Dendritic cell treated with granulocyte-macrophage colony-stimulating factor and Interleukin-4, amounts not matched to agents 40 ng/mL and 50 ng/mL, for 4 days (primary cell): ENCODE measurements at regions of chr3 and their contacts with region 1.

Region 1: DNA sequence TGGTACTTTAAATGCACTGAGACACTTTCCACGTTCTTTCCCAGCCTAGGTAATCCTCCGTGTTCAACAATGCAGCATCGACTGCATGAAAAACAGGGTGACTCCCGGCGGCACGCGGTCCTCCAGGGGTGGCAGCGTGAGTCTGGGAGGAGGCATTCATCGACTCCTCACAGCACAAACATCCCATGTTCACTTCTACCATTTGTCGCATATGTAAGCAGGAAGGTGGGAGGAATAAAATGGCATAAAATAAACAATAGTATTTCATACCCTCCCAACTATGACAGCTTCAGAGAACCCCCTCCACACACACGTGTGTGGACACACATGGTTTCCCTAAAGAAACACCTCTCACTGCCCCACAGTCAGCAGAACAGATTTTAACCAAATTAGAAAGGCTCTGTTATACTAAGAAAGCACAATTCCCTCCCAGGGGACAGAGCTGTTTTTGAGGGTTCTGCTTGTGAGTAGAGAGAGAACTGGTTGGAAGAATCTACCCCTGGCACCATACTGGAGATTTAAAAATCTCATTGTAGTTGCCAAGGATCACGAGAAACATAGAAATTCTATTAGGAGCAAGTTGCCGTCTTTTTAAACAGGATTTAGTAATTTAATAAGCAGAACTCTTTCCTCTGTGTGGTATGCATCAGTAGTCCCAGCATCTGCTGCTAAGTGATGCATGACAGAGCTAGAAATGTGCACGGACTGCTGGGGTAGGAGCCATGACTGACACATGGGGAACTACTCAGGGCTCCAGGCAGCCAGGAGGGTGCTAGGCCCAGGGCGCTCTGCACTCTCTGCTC is 6.0 kb downstream of the FAM43A start:
- H3K4me3 Mint-ChIP-seq: no peak overlapping the region
- H3K27ac Mint-ChIP-seq: no peak overlapping the region
- H3K4me1 Mint-ChIP-seq: peaks cover 46% of the 10 kb centered on the region
- H3K27me3 Mint-ChIP-seq: peaks cover 13% of the 10 kb centered on the region

Region 2: DNA sequence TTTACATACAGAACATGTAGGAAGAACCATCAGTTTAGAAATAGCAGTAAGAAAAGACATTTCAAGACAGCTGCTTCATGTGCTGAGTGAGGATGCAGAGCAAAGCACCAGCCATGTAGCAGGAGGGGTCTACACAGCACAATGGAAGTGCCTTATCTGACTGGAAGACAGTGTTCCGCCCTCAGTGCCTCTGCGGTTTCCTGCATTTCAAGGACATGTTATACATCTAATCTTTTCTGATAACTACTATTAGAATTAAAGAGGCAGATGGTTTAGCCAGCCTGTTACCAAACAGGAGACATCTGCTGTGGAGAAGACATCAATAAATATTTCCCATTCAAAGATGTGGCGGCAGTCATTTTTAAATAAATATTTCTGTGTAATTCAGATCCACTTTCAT is 30.3 kb before region 1 on chr3:
- intact Hi-C with region 1: no loop called
- H3K4me3 Mint-ChIP-seq: no peak overlapping the region
- H3K27ac Mint-ChIP-seq: no peak overlapping the region
- H3K4me1 Mint-ChIP-seq: no peaks in the 10 kb centered on the region
- H3K27me3 Mint-ChIP-seq: no peaks in the 10 kb centered on the region

Region 3: GRCh38 chr3:194711913-194712312 is 20.2 kb after region 1 on chr3:
- intact Hi-C with region 1: loop called (anchors 1 kb)
- H3K4me3 Mint-ChIP-seq: no peak overlapping the region
- H3K27ac Mint-ChIP-seq: no peak overlapping the region
- H3K4me1 Mint-ChIP-seq: peaks cover 13% of the 10 kb centered on the region
- H3K27me3 Mint-ChIP-seq: peaks cover 7% of the 10 kb centered on the region

Region 4: DNA sequence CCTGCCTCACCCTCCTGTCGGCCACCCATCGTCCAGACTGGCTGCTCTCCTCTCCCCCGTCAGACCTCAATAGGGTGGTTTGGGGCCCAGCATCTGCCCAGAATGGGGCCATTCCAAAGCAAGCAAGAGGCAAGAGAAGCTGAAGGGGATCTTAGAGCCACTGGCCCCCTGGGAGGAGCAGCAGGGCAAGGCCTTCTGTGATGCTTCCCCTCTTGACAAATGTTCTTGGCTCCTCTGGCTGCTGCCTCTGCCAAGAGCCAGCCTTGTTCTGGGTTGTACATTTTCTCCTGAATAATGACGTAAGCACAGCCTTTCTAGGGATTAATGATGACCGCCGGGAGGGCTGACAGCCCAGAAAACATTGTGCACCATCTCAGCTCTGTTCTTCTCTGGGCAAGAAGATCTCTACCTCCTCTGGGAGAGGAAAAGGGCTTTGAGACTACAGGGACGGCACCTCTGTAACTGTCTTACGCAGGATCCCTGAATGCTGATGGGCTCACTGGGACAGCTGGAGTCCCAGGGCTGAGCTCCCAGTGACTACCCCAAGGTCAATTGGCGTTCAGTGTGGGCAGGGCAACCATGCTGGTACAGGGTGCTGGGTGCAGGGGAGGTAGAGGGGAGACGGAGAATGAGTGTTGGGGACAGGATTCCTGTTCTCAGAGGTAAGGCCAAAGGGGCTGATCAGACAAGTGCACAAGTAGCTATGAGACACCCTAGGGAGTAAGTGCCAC is 247.3 kb after region 1 on chr3:
- intact Hi-C with region 1: no loop called
- H3K4me3 Mint-ChIP-seq: no peak overlapping the region
- H3K27ac Mint-ChIP-seq: peak overlapping the region; percentile 43
- H3K4me1 Mint-ChIP-seq: peaks cover 73% of the 10 kb centered on the region
- H3K27me3 Mint-ChIP-seq: peaks cover 16% of the 10 kb centered on the region